ENCODE measurements at regions of chr1 and their contacts with region 1.

Region 1: DNA sequence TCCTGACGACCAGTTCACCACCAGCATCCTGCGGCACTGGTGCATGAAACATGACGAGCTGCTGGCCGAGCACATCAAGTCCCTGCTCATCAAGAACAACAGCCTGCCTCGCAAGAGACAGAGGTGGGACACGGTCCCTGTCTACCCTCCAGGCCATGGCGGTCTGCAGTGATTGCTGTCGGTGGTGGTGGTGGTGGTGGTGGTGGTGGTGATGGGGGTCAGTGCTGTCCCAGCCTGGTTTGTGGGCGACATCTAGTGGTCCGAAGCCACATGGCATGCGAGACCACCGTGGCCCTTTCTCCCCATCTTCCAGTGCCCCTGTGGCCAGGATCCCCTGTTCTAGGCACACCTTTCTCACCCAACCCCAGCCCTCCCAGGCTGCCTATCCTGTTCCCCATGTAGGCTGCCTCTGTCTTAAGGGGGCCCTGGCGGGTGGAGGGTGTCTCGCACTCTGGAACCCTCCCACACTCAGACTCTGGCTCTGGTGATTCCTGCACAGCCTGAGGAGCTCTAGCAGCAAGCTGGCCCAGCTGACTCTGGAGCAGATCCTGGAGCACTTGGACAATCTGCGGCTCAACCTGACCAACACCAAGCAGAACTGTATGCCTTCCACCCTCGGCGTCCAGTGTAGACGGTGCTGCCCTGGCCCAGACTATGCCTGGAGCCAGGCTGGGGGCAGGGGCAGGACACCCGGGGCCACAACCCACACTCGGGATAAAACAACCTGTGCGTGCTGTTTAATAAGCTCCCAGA is 3.2 kb upstream of the SLC27A3 start:
- DNase-seq: no peak

Region 2: DNA sequence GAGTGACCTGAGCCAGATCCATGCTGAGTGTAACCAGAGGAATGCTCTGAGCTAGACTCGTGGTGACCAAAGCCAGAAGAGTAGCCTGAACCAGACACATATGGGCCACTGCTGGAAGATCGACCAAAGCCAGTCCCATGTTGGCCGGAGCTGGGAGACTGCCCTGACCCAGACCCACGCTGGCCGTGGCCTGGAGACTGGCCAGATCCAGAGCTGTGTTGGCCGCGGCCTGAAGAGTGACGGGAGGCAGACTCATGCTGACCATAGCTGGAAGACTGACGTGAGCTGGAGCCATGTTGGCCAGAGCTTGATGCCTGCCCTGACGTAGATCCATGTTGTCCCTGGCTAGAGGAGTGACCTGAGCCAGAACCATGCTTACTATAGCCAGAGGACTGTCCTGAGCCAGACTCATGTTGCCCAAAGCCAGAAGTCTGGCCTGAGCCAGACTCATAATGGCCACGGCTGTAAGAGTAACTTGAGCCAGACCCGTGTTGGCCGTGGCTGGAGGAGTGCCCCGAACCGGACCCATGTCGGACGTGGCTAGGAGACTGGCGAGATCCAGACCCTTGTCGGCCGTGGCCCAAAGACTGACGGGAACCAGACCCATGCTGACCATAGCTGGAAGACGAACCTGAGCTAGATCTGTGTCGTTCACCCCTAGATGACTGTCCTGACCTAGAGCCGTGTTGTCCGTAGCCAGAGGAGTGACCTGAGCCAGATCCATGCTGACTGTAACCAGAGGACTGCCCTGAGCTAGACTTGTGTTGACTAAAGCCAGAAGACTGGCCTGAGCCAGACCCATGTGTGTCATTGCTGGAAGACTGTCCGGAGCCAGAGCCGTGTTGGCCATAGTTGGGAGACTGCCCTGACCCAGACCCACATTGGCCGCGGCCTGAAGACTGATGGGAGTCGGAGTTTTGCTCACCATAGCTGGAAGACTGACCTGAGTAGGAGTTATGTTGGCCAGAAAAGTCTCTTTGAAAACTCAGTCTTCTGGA is 1551.6 kb before region 1 on chr1:
- intact Hi-C with region 1: no loop called
- DNase-seq: peak; percentile 80

Region 3: DNA sequence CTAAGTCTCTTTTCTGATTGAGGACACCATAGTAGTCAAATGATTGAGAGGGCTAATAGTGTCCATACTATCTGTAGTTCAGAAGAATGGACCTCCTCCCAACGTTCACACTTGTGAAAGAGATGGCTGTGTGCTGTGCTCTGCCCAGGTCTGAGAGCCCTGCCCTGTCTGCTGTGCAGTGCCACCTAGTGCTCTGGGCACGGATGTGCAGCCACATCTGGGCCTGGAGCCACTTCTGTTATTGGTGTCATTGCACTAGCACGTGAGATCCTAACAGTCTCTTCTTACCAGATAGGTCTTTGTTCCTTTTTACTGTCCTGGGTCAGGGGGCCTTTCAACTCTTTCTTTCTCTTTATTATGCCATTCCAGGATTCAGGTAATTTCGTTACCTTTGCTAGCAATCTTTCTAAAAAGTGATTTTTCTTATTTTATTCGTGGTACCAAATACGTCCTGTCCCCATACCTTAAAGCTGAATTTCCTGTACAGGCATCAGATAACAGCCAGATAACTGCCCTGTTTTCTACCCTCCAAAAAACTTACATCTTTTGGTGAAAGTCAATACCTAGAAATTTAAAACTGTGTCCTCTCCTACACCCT is 22.5 kb before region 1 on chr1:
- intact Hi-C with region 1: loop called in 1 of 2 experiments (anchors 1 kb)
- DNase-seq: peak; percentile 96